ENCODE measurements at regions of chr4 and their contacts with region 1.

Region 1: GRCh38 chr4:47914220-47914925 is at the start of gene NFXL1:
- DNase-seq: peak; percentile 93 to 97 (median 94)
- H3K4me3 ChIP-seq: peak within 1 kb of the TSS; percentile 89 to 100
- H3K4me3 Mint-ChIP-seq: peak within 1 kb of the TSS; percentile 94 to 99 (median 98)
- H3K27ac ChIP-seq: peak within 1 kb of the TSS; percentile 75
- H3K27ac Mint-ChIP-seq: peak within 1 kb of the TSS; percentile 93 to 99 (median 96)
- H3K4me1 ChIP-seq: peaks cover 23% of the 10 kb centered on the region
- H3K4me1 Mint-ChIP-seq: peaks cover 22 to 41% (median 28%) of the 10 kb centered on the region in 4 donors
- H3K27me3 ChIP-seq: no peaks in the 10 kb centered on the region
- H3K27me3 Mint-ChIP-seq: no peaks in the 10 kb centered on the region
- total RNA-seq, gene NFXL1: 16.6 to 21.1 TPM

Region 2: DNA sequence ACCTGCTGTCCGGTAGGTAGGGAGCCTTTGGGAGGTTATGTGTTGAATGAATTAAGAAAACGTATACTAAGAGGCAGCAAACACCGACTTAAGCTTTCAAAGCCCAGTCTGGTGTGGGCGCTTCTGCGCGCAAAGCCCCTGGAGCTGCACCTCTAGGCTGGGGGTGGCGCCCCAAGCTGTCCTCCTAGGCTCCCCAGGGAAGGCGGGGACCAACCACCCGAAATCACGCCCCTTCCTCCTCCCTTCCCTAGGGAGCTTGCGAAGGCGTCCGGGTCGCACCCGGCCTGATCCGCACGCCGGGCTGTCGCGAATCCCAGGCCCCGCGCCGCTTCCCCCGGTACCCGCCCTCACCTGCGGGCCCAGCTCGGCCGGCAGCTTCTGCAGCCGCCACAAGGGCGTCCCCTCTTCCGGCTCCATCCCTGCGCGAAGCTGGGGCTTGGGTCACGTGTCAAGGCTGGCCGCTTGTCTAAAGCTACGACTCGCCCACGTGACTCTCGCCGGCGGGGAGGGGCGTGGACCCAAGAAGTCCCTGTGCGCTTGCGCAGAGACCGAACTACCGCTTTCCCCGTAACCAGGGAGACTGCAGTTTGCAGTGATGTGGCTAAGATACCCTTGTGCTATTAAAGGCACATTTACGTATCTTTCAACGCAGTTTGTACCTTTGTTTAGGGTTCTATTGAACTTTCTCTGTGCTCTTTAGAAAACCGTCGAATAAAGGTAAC is 451.0 kb before region 1 on chr4 and contains the start of gene COMMD8:
- CTCF ChIA-PET with region 1: no interaction called
- POLR2A ChIA-PET with region 1: interaction called, 6 read pairs
- intact Hi-C with region 1: loop called (anchors 2 kb)
- DNase-seq: peak; percentile 96 to 98 (median 97)
- H3K4me3 ChIP-seq: peak within 1 kb of the TSS; percentile 48 to 92
- H3K4me3 Mint-ChIP-seq: peak within 1 kb of the TSS; percentile 88 to 92 (median 90)
- H3K27ac ChIP-seq: peak within 1 kb of the TSS; percentile 79
- H3K27ac Mint-ChIP-seq: peak within 1 kb of the TSS; percentile 90 to 99 (median 96)
- H3K4me1 ChIP-seq: peaks cover 24% of the 10 kb centered on the region
- H3K4me1 Mint-ChIP-seq: peaks cover 26 to 42% (median 36%) of the 10 kb centered on the region in 4 donors
- H3K27me3 ChIP-seq: no peaks in the 10 kb centered on the region
- H3K27me3 Mint-ChIP-seq: peaks cover 0 to 2% of the 10 kb centered on the region in 2 donors
- total RNA-seq, gene COMMD8: 14.6 to 18.3 TPM

Region 3: GRCh38 chr4:47713128-47713834 is 201.1 kb before region 1 on chr4:
- CTCF ChIA-PET with region 1: no interaction called
- POLR2A ChIA-PET with region 1: no interaction called
- intact Hi-C with region 1: no loop called
- DNase-seq: no peak
- H3K4me3 ChIP-seq: no peak overlapping the region
- H3K4me3 Mint-ChIP-seq: no peak overlapping the region
- H3K27ac ChIP-seq: no peak overlapping the region
- H3K27ac Mint-ChIP-seq: no peak overlapping the region
- H3K4me1 ChIP-seq: no peaks in the 10 kb centered on the region
- H3K4me1 Mint-ChIP-seq: no peaks in the 10 kb centered on the region
- H3K27me3 ChIP-seq: no peaks in the 10 kb centered on the region
- H3K27me3 Mint-ChIP-seq: peaks cover 14 to 25% of the 10 kb centered on the region in 2 donors

Region 4: GRCh38 chr4:47836641-47837093 is 77.7 kb before region 1 on chr4:
- CTCF ChIA-PET with region 1: interaction called, 3 read pairs
- POLR2A ChIA-PET with region 1: interaction called, 5 read pairs
- intact Hi-C with region 1: loop called (anchors 1 kb)
- DNase-seq: peak; percentile 30 to 66 (median 41)
- H3K4me3 ChIP-seq: peak overlapping the region; percentile 54 to 81
- H3K4me3 Mint-ChIP-seq: peak overlapping the region; percentile 87 to 93 (median 89)
- H3K27ac ChIP-seq: no peak overlapping the region
- H3K27ac Mint-ChIP-seq: peak overlapping the region; percentile 4 to 75 (median 48)
- H3K4me1 ChIP-seq: peaks cover 25% of the 10 kb centered on the region
- H3K4me1 Mint-ChIP-seq: peaks cover 14 to 47% (median 20%) of the 10 kb centered on the region in 4 donors
- H3K27me3 ChIP-seq: no peaks in the 10 kb centered on the region
- H3K27me3 Mint-ChIP-seq: no peaks in the 10 kb centered on the region

Region 5: DNA sequence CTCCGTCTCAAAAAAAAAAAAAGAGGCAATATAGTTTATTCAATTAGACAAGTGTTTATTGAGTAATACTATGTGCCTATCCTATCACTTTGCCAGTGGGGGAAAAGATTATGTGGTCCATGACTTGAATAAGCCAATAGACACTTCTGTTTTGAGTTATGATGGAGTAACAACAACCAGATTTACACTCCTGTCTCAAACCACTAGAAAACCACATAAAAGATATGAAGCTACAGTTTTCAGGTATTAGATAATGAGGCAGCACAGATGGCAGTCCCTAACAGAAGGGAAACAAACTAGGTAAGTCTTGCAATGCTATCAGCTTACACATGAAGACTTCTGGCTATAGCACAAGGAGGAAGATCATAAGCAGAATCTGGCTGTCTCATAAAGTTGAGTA is 22.4 kb before region 1 on chr4:
- CTCF ChIA-PET with region 1: no interaction called
- POLR2A ChIA-PET with region 1: no interaction called
- intact Hi-C with region 1: no loop called
- DNase-seq: peak in 2 of 5 donors; percentile 2 to 5
- H3K4me3 ChIP-seq: no peak overlapping the region
- H3K4me3 Mint-ChIP-seq: peak overlapping the region in 1 of 8 donors; percentile 42
- H3K27ac ChIP-seq: no peak overlapping the region
- H3K27ac Mint-ChIP-seq: peak overlapping the region in 1 of 7 donors; percentile 39
- H3K4me1 ChIP-seq: peaks cover 8% of the 10 kb centered on the region
- H3K4me1 Mint-ChIP-seq: peaks cover 8 to 11% (median 9%) of the 10 kb centered on the region in 4 donors
- H3K27me3 ChIP-seq: no peaks in the 10 kb centered on the region
- H3K27me3 Mint-ChIP-seq: no peaks in the 10 kb centered on the region

Region 6: GRCh38 chr4:48016141-48017103 is 102.0 kb after region 1 on chr4 and contains the starts of genes CNGA1 and NIPAL1:
- CTCF ChIA-PET with region 1: no interaction called
- POLR2A ChIA-PET with region 1: no interaction called
- intact Hi-C with region 1: loop called (anchors 5 kb)
- DNase-seq: peak; percentile 63 to 71 (median 68)
- H3K4me3 ChIP-seq: peak within 1 kb of the TSS; percentile 50 to 57
- H3K4me3 Mint-ChIP-seq: peak within 1 kb of the TSS; percentile 77 to 92 (median 87)
- H3K27ac ChIP-seq: no peak within 1 kb of the TSS
- H3K27ac Mint-ChIP-seq: peak within 1 kb of the TSS in 4 of 7 donors; percentile 6 to 75 (median 40)
- H3K4me1 ChIP-seq: peaks cover 16% of the 10 kb centered on the region
- H3K4me1 Mint-ChIP-seq: peaks cover 4 to 12% (median 9%) of the 10 kb centered on the region in 4 donors
- H3K27me3 ChIP-seq: no peaks in the 10 kb centered on the region
- H3K27me3 Mint-ChIP-seq: peaks cover 8 to 16% of the 10 kb centered on the region in 2 donors
- total RNA-seq, gene CNGA1: not detected
- total RNA-seq, gene NIPAL1: 3.0 to 3.3 TPM

Region 7: DNA sequence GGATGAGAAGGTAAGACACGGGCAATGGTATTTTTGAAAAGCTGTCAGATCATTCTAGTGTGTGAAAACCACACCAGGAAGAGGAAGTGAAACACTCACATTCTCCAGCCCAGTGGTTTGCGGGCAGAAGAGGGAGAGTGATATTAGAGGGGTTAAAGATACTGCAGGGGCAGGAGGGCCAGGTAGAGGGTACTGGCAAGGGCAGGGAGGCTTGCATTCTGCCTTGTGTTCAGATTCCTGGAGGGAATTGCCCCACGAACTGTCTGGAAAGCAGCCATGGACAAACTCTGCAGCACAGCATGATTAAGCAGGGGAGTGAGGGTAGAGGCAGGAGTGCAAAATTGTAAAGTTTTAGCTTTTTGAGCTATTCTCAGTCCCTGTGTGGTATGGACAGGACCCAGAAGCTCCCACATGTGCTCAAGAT is 133.1 kb after region 1 on chr4:
- CTCF ChIA-PET with region 1: no interaction called
- POLR2A ChIA-PET with region 1: no interaction called
- intact Hi-C with region 1: loop called (anchors 1 kb)
- DNase-seq: peak; percentile 40 to 67 (median 51)
- H3K4me3 ChIP-seq: no peak overlapping the region
- H3K4me3 Mint-ChIP-seq: peak overlapping the region in 7 of 8 donors; percentile 46 to 90 (median 77)
- H3K27ac ChIP-seq: no peak overlapping the region
- H3K27ac Mint-ChIP-seq: peak overlapping the region in 4 of 7 donors; percentile 0 to 52 (median 22)
- H3K4me1 ChIP-seq: peaks cover 57% of the 10 kb centered on the region
- H3K4me1 Mint-ChIP-seq: peaks cover 37 to 68% (median 52%) of the 10 kb centered on the region in 4 donors
- H3K27me3 ChIP-seq: no peaks in the 10 kb centered on the region
- H3K27me3 Mint-ChIP-seq: peaks cover 4 to 10% of the 10 kb centered on the region in 2 donors

Region 8: DNA sequence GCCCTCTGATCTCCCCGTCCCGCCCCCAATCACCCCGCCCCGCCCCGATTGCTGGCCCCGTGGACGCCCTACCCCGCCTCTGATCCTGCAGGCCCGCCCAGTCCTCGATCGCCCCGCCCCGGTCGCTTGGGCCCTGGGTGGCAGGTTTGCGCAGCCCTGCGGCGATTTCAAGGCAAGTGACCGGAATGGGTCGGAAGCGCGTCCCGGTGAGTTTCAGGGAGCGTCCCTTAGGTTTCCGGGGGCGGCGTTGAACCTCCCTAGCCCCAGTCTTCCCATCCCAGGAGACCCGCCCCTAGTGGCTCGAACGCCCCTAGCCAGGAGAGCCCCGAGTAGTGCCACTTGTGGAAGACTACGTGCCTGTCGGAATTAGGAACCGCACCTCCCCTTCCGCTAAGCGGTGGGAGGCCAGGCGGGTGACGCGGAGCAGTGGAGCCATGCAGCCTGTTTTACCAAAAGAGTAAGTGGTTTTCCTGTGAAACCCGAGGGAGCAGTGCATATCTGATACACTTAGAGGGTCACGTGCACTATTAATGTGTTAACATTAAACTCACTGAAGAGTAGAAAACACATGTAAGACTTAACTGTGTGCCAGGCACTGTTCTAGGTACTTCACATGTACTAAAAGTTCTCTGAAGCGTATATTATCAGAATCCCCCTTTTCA is 355.6 kb after region 1 on chr4:
- CTCF ChIA-PET with region 1: no interaction called
- POLR2A ChIA-PET with region 1: no interaction called
- intact Hi-C with region 1: loop called (anchors 2 kb)
- DNase-seq: peak; percentile 74 to 86 (median 77)
- H3K4me3 ChIP-seq: peak overlapping the region; percentile 50 to 59
- H3K4me3 Mint-ChIP-seq: peak overlapping the region; percentile 91 to 98 (median 96)
- H3K27ac ChIP-seq: peak overlapping the region; percentile 48
- H3K27ac Mint-ChIP-seq: peak overlapping the region; percentile 82 to 93 (median 90)
- H3K4me1 ChIP-seq: peaks cover 14% of the 10 kb centered on the region
- H3K4me1 Mint-ChIP-seq: peaks cover 9 to 24% (median 10%) of the 10 kb centered on the region in 4 donors
- H3K27me3 ChIP-seq: no peaks in the 10 kb centered on the region
- H3K27me3 Mint-ChIP-seq: no peaks in the 10 kb centered on the region